Mammary epithelial cell (primary cell): ENCODE measurements at regions of chr16 and their contacts with region 1.

Region 1: DNA sequence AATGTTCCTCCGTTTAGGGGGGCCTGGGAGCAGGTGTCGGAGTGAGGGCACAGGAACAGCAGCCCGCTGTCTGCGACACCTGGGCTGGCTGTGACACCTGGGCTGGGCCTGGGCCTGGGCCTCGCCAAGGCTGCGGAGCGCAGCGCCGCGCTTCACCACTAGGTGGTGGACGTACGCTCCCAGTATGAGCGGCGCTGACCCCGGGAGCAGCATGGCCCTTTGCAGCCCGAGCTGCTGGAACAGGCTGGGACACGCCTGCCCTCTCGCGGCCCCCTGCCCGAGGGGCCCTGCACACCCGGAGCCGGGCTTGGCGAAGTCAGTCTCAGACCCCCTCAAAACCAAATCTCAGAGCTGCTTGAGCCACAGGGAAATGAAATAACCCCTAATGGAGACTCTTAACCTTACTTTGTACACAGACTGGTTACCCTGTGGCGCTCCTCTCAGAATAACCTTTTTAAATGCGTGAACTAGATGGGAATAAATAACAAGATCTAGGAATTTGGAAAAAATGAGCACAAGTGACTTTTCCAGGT is 38.6 kb upstream of the FA2H start:
- DNase-seq: peak; percentile 52
- H3K4me3 ChIP-seq: no peak overlapping the region
- H3K27ac ChIP-seq: no peak overlapping the region
- H3K4me1 ChIP-seq: peaks cover 5% of the 10 kb centered on the region
- H3K27me3 ChIP-seq: no peaks in the 10 kb centered on the region
- CTCF ChIP-seq: peak; percentile 88 to 97

Region 2: GRCh38 chr16:74852500-74852875 is 39.3 kb after region 1 on chr16:
- CTCF ChIA-PET with region 1: no interaction called
- dilution Hi-C with region 1: loop called (anchors 5 kb)
- in situ Hi-C with region 1: no loop called
- intact Hi-C with region 1: no loop called
- DNase-seq: no peak
- H3K4me3 ChIP-seq: no peak overlapping the region
- H3K27ac ChIP-seq: no peak overlapping the region
- H3K4me1 ChIP-seq: no peaks in the 10 kb centered on the region
- H3K27me3 ChIP-seq: no peaks in the 10 kb centered on the region
- CTCF ChIP-seq: no peak

Region 3: DNA sequence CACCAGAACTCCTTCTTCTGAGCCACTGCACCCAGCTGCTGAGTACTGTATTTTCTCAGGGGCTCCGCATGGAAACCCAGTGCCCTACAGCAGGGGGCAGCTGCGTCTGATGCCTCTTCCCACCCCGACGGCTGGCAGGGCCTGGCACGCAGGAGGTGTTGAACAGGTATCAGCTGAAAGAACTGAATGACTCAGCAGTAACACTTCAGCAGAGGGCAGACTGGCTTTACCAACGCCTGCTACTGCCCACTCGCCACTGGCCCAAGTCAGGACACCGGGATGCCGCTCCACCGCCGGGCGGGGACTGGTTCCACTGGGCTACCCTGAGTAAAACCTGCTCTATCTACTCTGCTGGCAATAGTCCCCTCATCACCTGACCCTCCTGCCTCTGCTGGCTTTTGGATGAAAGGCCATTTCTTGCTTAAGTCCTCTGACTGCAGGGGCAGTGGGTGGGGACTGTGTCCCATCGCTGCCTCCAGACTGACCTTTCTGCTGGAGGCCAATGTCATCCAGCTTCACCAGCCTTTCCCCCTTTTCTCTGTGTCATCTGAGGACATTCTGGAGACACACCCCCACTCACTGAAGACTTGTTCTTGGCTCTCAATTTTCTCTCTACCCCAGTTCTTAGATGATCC is 61.9 kb after region 1 on chr16:
- CTCF ChIA-PET with region 1: no interaction called
- dilution Hi-C with region 1: no loop called
- in situ Hi-C with region 1: loop called in 1 of 2 experiments (anchors 10 kb)
- intact Hi-C with region 1: no loop called
- DNase-seq: peak; percentile 56
- H3K4me3 ChIP-seq: no peak overlapping the region
- H3K27ac ChIP-seq: no peak overlapping the region
- H3K4me1 ChIP-seq: peaks cover 10% of the 10 kb centered on the region
- H3K27me3 ChIP-seq: no peaks in the 10 kb centered on the region
- CTCF ChIP-seq: peak in 1 of 2 donors; percentile 12

Region 4: GRCh38 chr16:75110637-75111513 is 297.7 kb after region 1 on chr16:
- CTCF ChIA-PET with region 1: interaction called, 3 read pairs
- dilution Hi-C with region 1: no loop called
- in situ Hi-C with region 1: no loop called
- intact Hi-C with region 1: loop called (anchors 1 kb)
- DNase-seq: peak; percentile 80
- H3K4me3 ChIP-seq: peak overlapping the region in 2 of 3 experiments; percentile 28 to 42
- H3K27ac ChIP-seq: peak overlapping the region; percentile 57
- H3K4me1 ChIP-seq: peaks cover 42% of the 10 kb centered on the region
- H3K27me3 ChIP-seq: no peaks in the 10 kb centered on the region
- CTCF ChIP-seq: peak; percentile 85 to 94